Activated CD8-positive, alpha-beta T cell treated with anti-CD3 and anti-CD28 coated beads for 36 hours (primary cell): ENCODE measurements at regions of chr15 and their contacts with region 1.

Region 1: DNA sequence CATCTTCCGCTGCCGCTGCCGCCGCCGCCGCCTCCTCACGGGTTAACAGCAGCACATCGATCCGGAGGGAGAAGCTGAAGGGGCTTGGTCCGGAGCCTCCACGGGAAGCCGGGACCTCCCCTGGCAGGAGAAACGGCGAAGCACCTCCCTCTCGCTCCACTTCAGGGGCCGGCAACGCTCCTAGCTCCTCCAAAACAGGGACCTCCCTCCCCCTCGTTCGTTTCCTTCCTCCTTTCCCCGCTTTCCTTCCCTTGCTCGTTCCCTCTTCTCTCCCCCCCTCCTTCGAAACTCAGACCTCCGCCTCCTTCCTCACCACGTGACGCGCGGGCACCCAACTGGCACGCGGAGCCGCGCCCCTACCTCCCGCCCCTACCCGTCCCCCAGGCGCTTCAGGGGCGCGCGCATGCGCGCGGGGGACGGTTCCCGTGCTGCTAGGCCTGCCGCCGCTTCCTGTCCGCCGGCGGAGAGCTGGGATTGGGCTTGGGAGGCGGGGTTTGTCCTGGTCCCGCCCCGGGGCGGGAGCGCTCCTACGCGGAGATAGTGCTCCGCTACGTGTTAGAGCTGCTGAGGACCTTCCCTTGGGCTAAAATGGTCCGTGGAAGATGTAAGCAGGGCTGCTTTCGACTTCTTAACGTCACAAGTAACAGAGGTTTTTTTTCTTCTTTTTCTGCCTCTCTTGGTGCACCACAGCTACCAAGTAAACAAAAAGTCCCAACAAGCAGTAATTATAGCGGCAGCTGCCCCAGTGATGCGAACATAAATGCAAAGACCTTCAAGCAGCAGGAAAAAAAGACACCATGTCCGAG is at the start of gene ADAM10:
- DNase-seq: peak; percentile 98
- ATAC-seq: peak; percentile 95
- H3K4me3 Mint-ChIP-seq: peak within 1 kb of the TSS; percentile 91
- H3K27ac Mint-ChIP-seq: peak within 1 kb of the TSS; percentile 96
- H3K4me1 Mint-ChIP-seq: peaks cover 38% of the 10 kb centered on the region
- H3K27me3 Mint-ChIP-seq: no peaks in the 10 kb centered on the region
- CTCF ChIP-seq: no peak
- total RNA-seq, gene ADAM10: 76.4 to 79.4 TPM

Region 2: GRCh38 chr15:58770857-58771620 is 21.3 kb after region 1 on chr15 and contains the start of gene MINDY2:
- CTCF ChIA-PET with region 1: interaction called, 21 read pairs
- POLR2A ChIA-PET with region 1: interaction called, 6 read pairs
- intact Hi-C with region 1: no loop called
- DNase-seq: peak; percentile 97
- ATAC-seq: peak; percentile 97
- H3K4me3 Mint-ChIP-seq: no peak within 1 kb of the TSS
- H3K27ac Mint-ChIP-seq: peak within 1 kb of the TSS; percentile 87
- H3K4me1 Mint-ChIP-seq: peaks cover 15% of the 10 kb centered on the region
- H3K27me3 Mint-ChIP-seq: no peaks in the 10 kb centered on the region
- CTCF ChIP-seq: peak; percentile 28
- total RNA-seq, gene MINDY2: 9.0 to 10.3 TPM